IMR-90 (cell line): ENCODE measurements at regions of chr9 and their contacts with region 1.

Region 1: GRCh38 chr9:33014665-33015014 is 10.4 kb upstream of the DNAJA1 start:
- DNase-seq: no peak
- ATAC-seq: no peak
- H3K4me3 ChIP-seq: no peak overlapping the region
- H3K27ac ChIP-seq: no peak overlapping the region
- H3K4me1 ChIP-seq: no peaks in the 10 kb centered on the region
- H3K27me3 ChIP-seq: no peaks in the 10 kb centered on the region
- CTCF ChIP-seq: no peak
- POLR2A ChIP-seq: no peak
- RAD21 ChIP-seq: no peak

Region 2: DNA sequence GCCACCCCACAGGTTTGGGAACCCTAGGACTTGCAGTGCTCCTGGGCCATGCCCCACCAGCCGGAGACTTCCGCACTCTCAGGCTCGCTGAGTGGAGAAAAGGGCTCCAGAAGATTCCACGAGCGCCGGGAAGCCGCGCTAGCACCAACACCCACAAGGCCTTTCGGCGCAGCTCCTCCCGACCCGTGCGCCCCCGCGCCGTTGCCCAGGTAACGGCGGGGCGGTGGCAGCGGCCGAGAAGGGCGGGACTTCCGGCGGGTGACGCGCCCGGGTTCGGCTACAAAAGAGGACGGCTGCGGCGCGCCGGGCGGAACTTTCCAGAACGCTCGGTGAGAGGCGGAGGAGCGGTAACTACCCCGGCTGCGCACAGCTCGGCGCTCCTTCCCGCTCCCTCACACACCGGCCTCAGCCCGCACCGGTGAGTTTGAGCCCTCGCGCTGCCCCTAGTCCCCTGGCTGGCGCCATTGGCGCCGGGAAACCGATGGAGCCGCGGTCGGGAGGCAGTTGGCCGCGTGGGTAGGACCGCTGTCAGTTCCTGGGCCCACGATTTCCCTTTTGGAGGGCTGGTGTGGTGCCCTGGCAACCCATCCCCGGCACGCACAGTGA is 10.4 kb after region 1 on chr9 and contains the start of gene DNAJA1:
- CTCF ChIA-PET with region 1: no interaction called
- POLR2A ChIA-PET with region 1: interaction called, 12 read pairs
- dilution Hi-C with region 1: no loop called
- in situ Hi-C with region 1: no loop called
- intact Hi-C with region 1: no loop called
- DNase-seq: peak; percentile 91
- ATAC-seq: peak; percentile 87
- H3K4me3 ChIP-seq: peak within 1 kb of the TSS; percentile 90
- H3K27ac ChIP-seq: peak within 1 kb of the TSS; percentile 89
- H3K4me1 ChIP-seq: peaks cover 8% of the 10 kb centered on the region
- H3K27me3 ChIP-seq: no peaks in the 10 kb centered on the region
- CTCF ChIP-seq: no peak
- POLR2A ChIP-seq: peak; percentile 100
- RAD21 ChIP-seq: no peak
- total RNA-seq, gene DNAJA1: 59.5 and 109 TPM in 2 replicates

Region 3: DNA sequence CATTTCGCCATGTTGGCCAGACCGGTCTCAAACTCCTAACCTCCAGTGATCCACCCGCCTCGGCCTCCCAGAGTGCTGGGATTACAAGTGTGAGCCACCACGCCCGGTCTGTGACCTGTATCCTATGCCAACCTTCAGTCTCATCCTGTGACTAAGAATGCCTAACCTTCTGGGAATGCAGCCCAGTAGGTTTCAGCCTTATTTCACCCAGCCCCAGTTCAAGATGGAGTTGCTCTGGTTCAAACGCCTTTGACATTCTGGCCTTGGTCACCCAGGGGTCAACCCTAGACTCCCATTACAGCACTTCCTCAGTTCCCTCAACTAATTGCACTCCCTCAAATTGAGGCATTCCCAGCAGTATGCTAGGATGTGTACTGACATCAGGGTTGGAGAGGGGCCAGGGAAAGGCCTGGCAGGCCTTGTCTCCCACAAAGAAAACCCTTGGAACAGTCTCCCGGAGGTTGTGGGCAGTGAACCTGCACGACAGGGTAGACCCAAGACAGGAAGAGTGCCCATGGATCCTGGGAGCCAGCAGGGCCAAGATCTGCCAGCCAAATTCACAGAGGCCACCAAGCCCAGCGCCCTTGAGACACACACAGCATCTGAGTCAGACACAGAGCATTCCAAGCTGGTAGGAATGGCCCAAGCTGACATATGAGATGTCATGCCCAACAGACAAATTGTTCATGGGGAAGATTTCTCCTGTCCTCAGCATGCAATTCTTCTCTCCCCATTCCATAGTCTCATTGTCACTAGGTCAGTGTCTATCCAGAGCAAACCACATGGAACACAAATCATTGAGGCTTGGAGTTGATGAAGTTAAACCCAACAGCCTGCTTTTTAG is 86.7 kb after region 1 on chr9:
- CTCF ChIA-PET with region 1: no interaction called
- POLR2A ChIA-PET with region 1: no interaction called
- dilution Hi-C with region 1: no loop called
- in situ Hi-C with region 1: no loop called
- intact Hi-C with region 1: no loop called
- DNase-seq: peak; percentile 39
- ATAC-seq: peak; percentile 68
- H3K4me3 ChIP-seq: no peak overlapping the region
- H3K27ac ChIP-seq: peak overlapping the region; percentile 39
- H3K4me1 ChIP-seq: peaks cover 13% of the 10 kb centered on the region
- H3K27me3 ChIP-seq: no peaks in the 10 kb centered on the region
- CTCF ChIP-seq: no peak
- POLR2A ChIP-seq: no peak
- RAD21 ChIP-seq: no peak